KBM-7 (cell line): ENCODE measurements at regions of chr3 and their contacts with region 1.

Region 1: GRCh38 chr3:186826976-186827731 is 15.4 kb upstream of the ADIPOQ start:
- DNase-seq: peak; percentile 86

Region 2: DNA sequence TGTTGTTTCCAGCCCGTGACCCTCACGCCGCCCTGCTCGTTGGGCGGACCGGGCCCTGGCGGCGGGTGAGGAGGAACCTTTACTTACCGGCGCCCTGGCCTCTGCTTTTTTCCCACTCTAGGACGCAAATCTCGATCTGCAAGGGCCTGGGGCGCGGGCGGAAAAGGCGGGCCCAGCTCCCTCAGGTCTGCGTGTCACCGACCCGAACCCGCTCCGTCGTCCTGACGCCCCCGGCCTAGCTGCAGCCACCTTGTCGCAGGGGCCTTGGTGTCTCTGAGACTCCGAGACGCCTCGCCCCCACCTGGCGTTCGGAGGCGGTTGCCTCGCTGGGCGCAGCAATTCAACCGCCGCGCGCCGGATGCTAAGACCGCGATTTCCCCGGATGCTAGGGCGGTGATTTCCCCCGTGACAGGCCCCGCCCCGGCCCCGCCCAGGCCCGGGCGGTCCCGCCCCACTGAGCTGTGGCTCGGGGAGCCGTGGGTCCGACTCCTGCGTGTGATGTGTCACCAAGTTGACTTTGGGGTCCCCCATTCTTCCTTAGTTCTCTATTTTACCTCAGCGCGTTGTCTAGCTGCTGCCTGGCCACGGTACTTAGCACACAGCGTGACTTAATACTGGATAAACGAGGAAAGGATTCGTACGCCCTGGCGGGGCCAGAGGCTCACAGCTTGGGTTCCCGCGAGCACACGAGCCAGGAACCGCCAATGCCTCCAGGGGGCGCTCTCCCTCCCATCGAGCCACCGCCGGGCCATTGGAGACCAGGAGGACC is 312.2 kb after region 1 on chr3 and contains the start of gene RPL39L:
- in situ Hi-C with region 1: loop called (anchors 25 kb)
- DNase-seq: peak; percentile 95

Region 3: DNA sequence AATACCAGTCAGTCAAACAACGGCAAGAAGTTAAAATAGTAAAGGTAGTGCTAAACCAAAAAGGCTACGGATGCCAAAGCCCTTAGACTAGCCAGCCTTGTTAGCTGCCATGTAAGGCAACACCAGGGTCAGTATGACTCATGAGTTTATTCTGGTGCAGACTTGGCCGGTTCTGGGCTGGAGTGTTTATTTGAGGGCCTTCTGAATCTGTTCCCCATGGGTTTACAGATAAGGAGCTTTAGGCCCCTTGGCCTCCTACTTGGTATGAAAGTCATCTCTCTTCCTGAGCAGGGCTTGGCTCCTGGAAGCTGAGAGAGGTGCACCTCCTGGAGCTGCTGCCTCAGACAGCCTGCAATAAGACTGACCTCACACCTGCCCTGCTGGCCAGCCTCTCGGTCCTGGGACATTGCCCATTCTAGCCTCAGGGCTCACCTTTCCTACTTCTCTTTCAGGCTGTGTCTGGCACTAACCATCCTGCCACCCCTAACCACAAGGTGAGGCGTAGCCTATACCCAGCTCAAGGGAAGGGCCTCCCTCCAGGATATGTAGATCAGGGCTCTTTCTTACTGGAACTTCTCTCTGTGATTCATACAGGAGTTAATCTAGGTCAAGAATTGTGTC is 359.8 kb after region 1 on chr3:
- in situ Hi-C with region 1: no loop called
- DNase-seq: no peak